SK-N-SH (cell line): ENCODE measurements at regions of chrX and their contacts with region 1.

Region 1: GRCh38 chrX:153708415-153708814 is 15.8 kb downstream of the BCAP31 start:
- DNase-seq: peak; percentile 83
- H3K4me3 ChIP-seq: no peak overlapping the region
- H3K27ac ChIP-seq: peak overlapping the region in 1 of 2 experiments; percentile 27; a peak in 1 of 4 replicates
- H3K4me1 ChIP-seq: peaks cover 0 to 6% of the 10 kb centered on the region in 2 experiments; a peak in 1 of 4 replicates
- H3K27me3 ChIP-seq: peaks cover 16% of the 10 kb centered on the region; the same call in 1 of the 2 replicates
- CTCF ChIP-seq: peak; percentile 70
- EP300 ChIP-seq: no peak
- RAD21 ChIP-seq: peak; percentile 80

Region 2: GRCh38 chrX:153599192-153600031 is 109.0 kb before region 1 on chrX:
- CTCF ChIA-PET with region 1: interaction called, 10 read pairs
- POLR2A ChIA-PET with region 1: no interaction called
- DNase-seq: peak; percentile 95
- H3K4me3 ChIP-seq: peak overlapping the region; percentile 63 to 69
- H3K27ac ChIP-seq: peak overlapping the region in 1 of 2 experiments; percentile 16; a peak in 1 of 4 replicates
- H3K4me1 ChIP-seq: peaks cover 0 to 9% of the 10 kb centered on the region in 2 experiments; a peak in 1 of 4 replicates
- H3K27me3 ChIP-seq: peaks cover 19% of the 10 kb centered on the region
- CTCF ChIP-seq: no peak
- EP300 ChIP-seq: no peak
- RAD21 ChIP-seq: no peak

Region 3: GRCh38 chrX:153719701-153720100 is 11.3 kb after region 1 on chrX:
- CTCF ChIA-PET with region 1: interaction called, 11 read pairs
- POLR2A ChIA-PET with region 1: no interaction called
- DNase-seq: no peak
- H3K4me3 ChIP-seq: no peak overlapping the region
- H3K27ac ChIP-seq: no peak overlapping the region
- H3K4me1 ChIP-seq: peaks cover 0 to 7% of the 10 kb centered on the region in 2 experiments; a peak in 1 of 4 replicates
- H3K27me3 ChIP-seq: no peaks in the 10 kb centered on the region; the same call in 1 of the 2 replicates
- CTCF ChIP-seq: no peak
- EP300 ChIP-seq: no peak
- RAD21 ChIP-seq: no peak

Region 4: DNA sequence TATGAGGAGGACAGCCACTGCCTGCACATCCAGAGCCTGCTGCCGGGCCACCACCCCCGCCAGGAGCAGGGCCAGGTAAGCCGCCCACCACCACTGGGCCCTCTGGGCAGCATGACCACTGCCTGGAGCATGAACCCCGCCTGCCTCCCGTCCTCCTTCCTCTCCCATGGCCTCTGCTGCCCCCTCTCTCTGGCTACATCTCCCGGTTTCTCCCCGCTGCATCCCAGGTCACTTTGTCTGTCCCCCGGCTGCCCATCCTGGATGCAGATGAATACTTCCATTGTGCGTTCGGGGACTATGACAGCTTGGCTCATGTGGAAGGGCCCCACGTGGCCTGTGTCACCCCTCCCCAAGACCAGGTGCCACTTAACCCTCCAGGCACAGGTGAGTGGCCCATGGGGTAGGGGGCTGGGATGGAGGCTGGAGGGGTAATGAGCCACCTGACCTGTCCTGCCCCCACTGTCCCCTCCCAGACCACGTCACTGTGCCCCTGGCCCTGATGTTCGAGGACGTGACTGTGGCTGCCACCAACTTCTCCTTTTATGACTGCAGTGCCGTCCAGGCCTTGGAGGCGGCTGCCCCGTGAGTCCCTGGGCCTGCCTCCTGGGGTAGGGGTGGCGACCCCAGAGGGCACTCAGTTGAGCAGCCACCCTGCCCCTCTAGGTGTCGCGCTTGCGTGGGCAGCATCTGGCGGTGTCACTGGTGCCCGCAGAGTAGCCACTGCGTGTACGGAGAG is 61.6 kb after region 1 on chrX:
- CTCF ChIA-PET with region 1: no interaction called
- POLR2A ChIA-PET with region 1: no interaction called
- DNase-seq: peak; percentile 29
- H3K4me3 ChIP-seq: no peak overlapping the region
- H3K27ac ChIP-seq: no peak overlapping the region
- H3K4me1 ChIP-seq: peaks cover 0 to 17% of the 10 kb centered on the region in 2 experiments; a peak in 1 of 4 replicates
- H3K27me3 ChIP-seq: no peaks in the 10 kb centered on the region
- CTCF ChIP-seq: no peak
- EP300 ChIP-seq: no peak
- RAD21 ChIP-seq: no peak